ENCODE measurements at regions of chr11 and their contacts with region 1.

Region 1: DNA sequence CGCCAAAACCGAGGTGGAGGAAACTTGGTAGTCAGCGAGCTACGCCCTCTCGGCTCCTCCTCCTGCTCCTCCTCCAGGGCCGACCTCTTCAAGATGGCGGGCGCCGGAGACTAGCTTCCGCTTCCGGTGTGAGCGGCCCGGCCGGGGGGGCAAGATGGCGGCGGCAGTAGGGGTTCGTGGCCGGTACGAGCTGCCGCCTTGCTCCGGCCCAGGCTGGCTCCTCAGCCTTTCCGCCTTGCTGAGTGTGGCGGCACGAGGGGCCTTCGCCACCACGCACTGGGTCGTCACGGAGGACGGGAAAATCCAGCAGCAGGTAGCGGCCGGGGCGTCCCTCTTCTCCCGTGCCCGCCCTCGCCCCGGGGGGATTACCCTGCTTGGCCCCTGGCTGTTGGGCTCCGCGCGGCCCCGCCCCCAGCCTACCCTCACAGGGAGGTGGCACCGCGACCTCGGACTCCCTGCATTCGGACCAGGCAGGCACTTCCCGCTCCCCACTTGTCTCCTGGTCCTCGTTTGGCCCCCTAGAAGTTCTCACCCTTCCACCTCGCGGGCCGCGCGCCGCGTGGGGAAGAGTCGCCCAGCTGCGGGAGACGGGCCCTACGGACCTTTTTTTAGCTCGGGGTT is at the start of gene TTC17:
- DNase-seq: peak; percentile 95
- H3K4me3 ChIP-seq: peak within 1 kb of the TSS; percentile 89
- H3K27ac ChIP-seq: peak within 1 kb of the TSS; percentile 75
- H3K4me1 ChIP-seq: peaks cover 22% of the 10 kb centered on the region
- CTCF ChIP-seq: no peak
- total RNA-seq, gene TTC17: 71.3 and 73.7 TPM in 2 replicates

Region 2: DNA sequence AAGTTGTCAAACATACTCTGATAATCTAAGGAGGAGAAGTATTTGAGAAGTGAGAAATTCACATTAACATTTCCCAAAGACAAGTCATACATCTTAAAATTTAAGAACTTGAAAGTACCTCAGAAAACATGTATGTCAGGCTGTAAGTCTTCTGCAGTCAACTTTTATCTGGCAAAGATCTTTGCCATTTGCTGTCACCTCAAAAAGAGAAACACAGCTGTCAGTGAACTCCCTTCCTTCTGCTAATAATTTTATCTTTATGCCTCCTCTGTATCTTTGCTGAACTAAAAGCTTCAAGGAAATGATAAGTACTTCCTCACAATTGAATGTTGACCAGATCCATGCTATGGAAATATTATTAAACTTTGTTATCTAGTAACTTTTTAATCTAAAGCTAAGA is 18.5 kb after region 1 on chr11:
- CTCF ChIA-PET with region 1: interaction called, 3 read pairs
- POLR2A ChIA-PET with region 1: interaction called, 17 read pairs
- intact Hi-C with region 1: no loop called
- DNase-seq: no peak
- H3K4me3 ChIP-seq: no peak overlapping the region
- H3K27ac ChIP-seq: no peak overlapping the region
- H3K4me1 ChIP-seq: no peaks in the 10 kb centered on the region
- CTCF ChIP-seq: no peak